BJ (cell line): ENCODE measurements at regions of chr20 and their contacts with region 1.

Region 1: DNA sequence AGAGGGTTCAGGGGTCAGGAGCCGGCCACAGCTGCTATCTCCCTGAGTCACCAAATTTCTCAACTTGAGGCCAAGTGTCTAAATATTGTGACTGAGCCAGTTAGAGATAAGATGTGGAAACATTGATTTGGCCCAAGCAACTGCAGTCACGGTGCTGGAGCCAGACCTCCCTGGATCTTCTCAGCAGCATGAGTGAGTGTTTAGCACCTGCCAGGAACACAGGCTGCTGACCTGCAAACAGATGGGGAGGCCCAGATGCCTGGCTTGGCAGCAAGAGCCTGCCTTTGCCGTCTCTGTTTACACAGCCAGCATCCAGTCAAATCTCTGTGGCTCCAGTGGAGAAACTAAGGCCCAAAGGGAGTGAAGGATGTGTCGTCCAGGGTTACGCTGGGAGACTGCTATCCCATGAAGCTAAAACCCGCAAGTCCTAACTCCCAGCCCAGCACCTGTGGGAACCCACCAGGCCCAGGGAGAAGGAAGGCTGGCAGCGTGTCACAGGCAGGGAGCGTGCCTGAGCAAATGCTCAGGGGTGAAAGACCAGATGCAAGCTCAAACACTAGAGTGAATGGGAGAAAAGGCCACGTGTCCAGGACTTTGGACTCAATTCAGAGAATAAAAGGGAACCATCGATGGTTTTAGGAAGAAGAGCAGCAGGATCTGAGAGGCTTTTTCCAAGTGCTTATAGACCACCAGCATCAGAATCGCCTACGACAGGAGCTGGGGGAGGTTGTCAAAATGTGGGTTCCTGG is 15.9 kb upstream of the PTGIS start:
- DNase-seq: peak; percentile 85
- H3K4me3 ChIP-seq: no peak overlapping the region
- H3K27me3 ChIP-seq: no peaks in the 10 kb centered on the region
- CTCF ChIP-seq: peak; percentile 12; the same call in 1 of the 2 replicates

Region 2: DNA sequence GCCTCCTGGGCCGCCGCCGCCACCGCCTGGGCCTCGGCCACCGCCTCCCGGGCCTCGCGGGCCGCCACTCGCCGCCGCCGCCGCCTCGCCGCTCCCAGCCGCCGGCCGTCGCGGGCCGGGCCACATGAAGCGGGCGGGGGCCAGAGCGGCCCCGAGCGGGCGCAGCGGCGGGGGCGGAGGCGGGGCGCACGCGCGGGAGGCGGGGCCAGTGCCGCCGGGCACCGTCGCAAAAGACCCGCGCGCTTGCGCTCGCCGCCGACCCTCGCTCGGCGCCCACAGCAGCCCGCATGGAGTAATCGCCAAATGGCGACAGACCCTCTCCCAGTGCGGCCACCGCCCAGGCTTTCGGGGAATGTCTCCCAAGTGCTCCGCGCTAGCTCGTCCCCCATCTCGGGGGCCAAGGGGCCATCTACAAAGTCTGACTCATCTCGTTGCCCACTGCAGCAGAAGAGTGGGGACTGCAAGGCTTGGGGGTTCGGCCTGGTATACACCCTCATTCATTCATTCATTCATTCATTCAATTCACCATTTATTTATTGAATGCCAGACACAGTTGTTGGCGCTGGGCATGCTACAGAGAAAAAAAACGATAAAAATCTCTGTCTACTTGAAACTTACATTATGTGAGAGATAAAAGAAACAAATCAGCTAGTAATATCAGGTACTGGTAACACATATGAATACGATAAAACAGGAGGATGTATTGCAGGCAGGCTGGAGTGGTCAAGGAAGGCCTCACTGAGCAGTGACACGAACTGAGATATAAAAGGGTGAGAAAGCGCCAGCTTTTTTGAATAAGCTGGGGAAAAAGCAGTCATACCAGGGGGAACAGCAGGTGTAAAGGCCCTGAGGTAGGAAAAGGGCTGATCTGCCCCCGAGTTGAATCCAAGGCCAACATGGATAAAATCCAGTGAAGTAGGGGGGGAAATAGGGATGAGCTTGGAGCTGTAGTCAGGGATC is 130.2 kb after region 1 on chr20 and contains the start of gene B4GALT5:
- CTCF ChIA-PET with region 1: no interaction called
- POLR2A ChIA-PET with region 1: no interaction called
- DNase-seq: no peak
- H3K4me3 ChIP-seq: peak within 1 kb of the TSS; percentile 94
- H3K27me3 ChIP-seq: no peaks in the 10 kb centered on the region
- CTCF ChIP-seq: no peak
- polyA plus RNA-seq, gene B4GALT5: 26.7 and 32.5 TPM in 2 replicates

Region 3: GRCh38 chr20:50913690-50914375 is 1330.0 kb after region 1 on chr20:
- CTCF ChIA-PET with region 1: no interaction called
- POLR2A ChIA-PET with region 1: interaction called, 12 read pairs
- DNase-seq: no peak
- H3K4me3 ChIP-seq: no peak overlapping the region
- H3K27me3 ChIP-seq: no peaks in the 10 kb centered on the region
- CTCF ChIP-seq: no peak